ENCODE measurements at regions of chr3 and their contacts with region 1.

Region 1: DNA sequence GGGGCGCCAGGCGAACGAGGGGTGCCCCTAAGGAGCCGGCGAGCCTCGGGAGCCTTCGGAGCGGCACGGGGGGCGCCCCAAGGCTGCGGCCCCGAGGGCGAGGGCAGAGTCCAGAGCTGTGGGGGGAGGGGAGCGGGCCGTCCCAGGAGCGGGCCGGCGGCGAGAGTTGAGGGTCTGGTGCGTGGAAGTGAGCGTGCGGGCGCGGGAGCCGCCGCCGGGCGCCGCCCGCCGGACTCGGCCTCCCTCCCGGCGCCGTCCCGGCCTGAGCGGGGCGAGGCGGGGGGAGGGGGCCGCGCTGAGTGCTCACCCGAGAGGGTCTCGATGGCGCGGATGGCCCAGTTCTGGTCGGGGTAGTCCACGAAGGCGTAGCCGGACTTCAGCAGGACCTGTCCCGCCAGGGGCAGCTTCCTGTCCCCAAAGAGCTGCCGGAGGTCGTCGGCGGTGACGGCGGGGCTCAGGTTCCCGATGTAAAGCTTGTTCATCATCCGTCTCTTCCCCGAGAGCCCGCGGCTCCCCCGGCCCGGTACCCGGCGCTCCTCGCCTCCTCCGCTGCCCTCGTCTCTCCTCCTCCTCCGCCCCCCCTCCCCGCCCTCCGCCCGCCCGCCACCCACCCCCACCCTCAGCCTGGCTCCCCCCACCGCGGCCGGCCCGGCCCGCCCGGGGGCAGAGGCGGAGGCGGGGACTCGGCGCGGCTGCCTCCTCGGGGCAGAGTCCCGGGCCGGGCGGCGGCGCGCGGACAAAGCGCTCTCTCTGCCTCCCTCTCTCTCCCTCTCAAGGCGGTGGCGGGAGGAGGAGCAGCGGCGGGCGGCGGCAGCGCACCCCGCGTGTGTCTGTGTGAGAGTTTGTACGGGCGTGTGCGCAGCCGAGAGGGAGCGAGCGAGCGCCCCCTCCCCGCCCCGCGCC is at the start of gene IGF2BP2:
- DNase-seq: peak; percentile 78
- H3K4me3 Mint-ChIP-seq: peak within 1 kb of the TSS; percentile 96
- H3K27ac Mint-ChIP-seq: peak within 1 kb of the TSS; percentile 99
- H3K4me1 Mint-ChIP-seq: peaks cover 23% of the 10 kb centered on the region
- H3K27me3 Mint-ChIP-seq: no peaks in the 10 kb centered on the region
- CTCF ChIP-seq: no peak
- total RNA-seq, gene IGF2BP2: 108 and 154 TPM in 2 replicates

Region 2: GRCh38 chr3:185402561-185402960 is 422.2 kb before region 1 on chr3:
- CTCF ChIA-PET with region 1: no interaction called
- POLR2A ChIA-PET with region 1: no interaction called
- intact Hi-C with region 1: no loop called
- DNase-seq: no peak
- H3K4me3 Mint-ChIP-seq: no peak overlapping the region
- H3K27ac Mint-ChIP-seq: no peak overlapping the region
- H3K4me1 Mint-ChIP-seq: no peaks in the 10 kb centered on the region
- H3K27me3 Mint-ChIP-seq: no peaks in the 10 kb centered on the region
- CTCF ChIP-seq: no peak

Region 3: DNA sequence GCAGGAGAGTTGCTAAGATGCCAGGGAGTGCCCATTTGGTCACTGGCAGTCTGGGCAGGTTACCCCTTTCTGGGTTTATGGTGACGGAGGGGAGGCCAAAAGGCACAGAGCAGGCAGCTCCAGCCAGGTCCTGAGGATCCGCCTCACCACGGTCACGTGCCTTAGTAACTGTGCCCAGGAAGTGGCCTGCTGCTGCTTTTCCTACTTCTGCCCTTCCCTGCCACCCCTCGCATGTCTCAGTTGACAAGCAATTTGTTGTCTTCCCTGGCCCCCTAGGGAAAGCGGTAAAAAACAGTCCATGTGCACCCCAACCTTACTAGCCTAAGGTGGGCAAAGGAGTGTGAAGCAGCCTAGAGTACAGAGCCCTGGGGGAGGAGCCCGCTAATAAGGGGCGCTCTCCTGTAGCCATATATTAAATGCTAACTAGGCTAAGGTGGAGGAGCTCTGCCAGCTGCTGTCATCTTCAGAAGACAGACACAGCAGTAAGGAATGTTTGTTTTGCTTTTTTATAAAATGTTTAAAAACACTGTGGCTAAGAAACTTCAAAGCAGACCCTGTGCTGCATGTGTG is 263.3 kb before region 1 on chr3:
- CTCF ChIA-PET with region 1: no interaction called
- POLR2A ChIA-PET with region 1: no interaction called
- intact Hi-C with region 1: no loop called
- DNase-seq: no peak
- H3K4me3 Mint-ChIP-seq: no peak overlapping the region
- H3K27ac Mint-ChIP-seq: no peak overlapping the region
- H3K4me1 Mint-ChIP-seq: peaks cover 15% of the 10 kb centered on the region
- H3K27me3 Mint-ChIP-seq: no peaks in the 10 kb centered on the region
- CTCF ChIP-seq: no peak

Region 4: GRCh38 chr3:185659942-185660921 is 164.5 kb before region 1 on chr3:
- CTCF ChIA-PET with region 1: interaction called, 4 read pairs
- POLR2A ChIA-PET with region 1: interaction called, 73 read pairs
- intact Hi-C with region 1: loop called (anchors 5 kb)
- DNase-seq: peak; percentile 84
- H3K4me3 Mint-ChIP-seq: no peak overlapping the region
- H3K27ac Mint-ChIP-seq: peak overlapping the region; percentile 86
- H3K4me1 Mint-ChIP-seq: peaks cover 53% of the 10 kb centered on the region
- H3K27me3 Mint-ChIP-seq: no peaks in the 10 kb centered on the region
- CTCF ChIP-seq: peak; percentile 97

Region 5: GRCh38 chr3:185733980-185734724 is 90.6 kb before region 1 on chr3:
- CTCF ChIA-PET with region 1: interaction called, 7 read pairs
- POLR2A ChIA-PET with region 1: interaction called, 128 read pairs
- intact Hi-C with region 1: loop called (anchors 1 kb)
- DNase-seq: peak; percentile 93
- H3K4me3 Mint-ChIP-seq: no peak overlapping the region
- H3K27ac Mint-ChIP-seq: peak overlapping the region; percentile 68
- H3K4me1 Mint-ChIP-seq: peaks cover 51% of the 10 kb centered on the region
- H3K27me3 Mint-ChIP-seq: no peaks in the 10 kb centered on the region
- CTCF ChIP-seq: peak; percentile 58

Region 6: GRCh38 chr3:185764163-185764979 is 60.4 kb before region 1 on chr3:
- CTCF ChIA-PET with region 1: interaction called, 8 read pairs
- POLR2A ChIA-PET with region 1: interaction called, 14 read pairs
- intact Hi-C with region 1: loop called (anchors 5 kb)
- DNase-seq: no peak
- H3K4me3 Mint-ChIP-seq: no peak overlapping the region
- H3K27ac Mint-ChIP-seq: peak overlapping the region; percentile 35
- H3K4me1 Mint-ChIP-seq: peaks cover 44% of the 10 kb centered on the region
- H3K27me3 Mint-ChIP-seq: no peaks in the 10 kb centered on the region
- CTCF ChIP-seq: no peak

Region 7: DNA sequence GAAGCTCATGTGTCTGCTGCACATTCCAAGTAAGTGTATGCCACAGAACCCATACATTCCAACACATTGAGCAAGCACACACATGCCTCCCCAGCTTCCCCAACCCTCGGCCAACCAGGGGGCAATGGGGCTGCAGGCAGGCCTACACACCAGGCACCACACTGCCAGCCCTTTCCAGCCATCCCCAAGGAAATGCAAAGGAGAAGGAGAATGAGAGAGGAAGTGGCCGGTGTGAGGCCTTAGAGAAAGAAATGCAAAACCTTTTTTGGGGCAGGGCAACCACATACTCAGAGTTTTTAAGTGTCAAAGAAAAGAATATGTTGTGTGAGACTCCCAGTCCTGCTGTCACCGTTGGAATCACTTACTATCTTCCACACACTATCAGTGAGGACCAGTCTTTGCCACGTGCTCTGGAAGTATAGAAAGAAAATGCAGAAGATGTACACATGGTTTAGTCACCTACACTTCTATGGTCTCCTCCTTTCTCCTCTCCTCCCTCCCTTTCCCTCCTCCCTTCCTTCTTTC is 11.0 kb before region 1 on chr3:
- CTCF ChIA-PET with region 1: interaction called, 5 read pairs
- POLR2A ChIA-PET with region 1: interaction called, 49 read pairs
- intact Hi-C with region 1: no loop called
- DNase-seq: peak; percentile 73
- H3K4me3 Mint-ChIP-seq: peak overlapping the region; percentile 39
- H3K27ac Mint-ChIP-seq: peak overlapping the region; percentile 85
- H3K4me1 Mint-ChIP-seq: peaks cover 39% of the 10 kb centered on the region
- H3K27me3 Mint-ChIP-seq: no peaks in the 10 kb centered on the region
- CTCF ChIP-seq: no peak

Region 8: GRCh38 chr3:185929192-185930151 is 104.7 kb after region 1 on chr3:
- CTCF ChIA-PET with region 1: interaction called, 5 read pairs
- POLR2A ChIA-PET with region 1: interaction called, 71 read pairs
- intact Hi-C with region 1: loop called (anchors 2 kb)
- DNase-seq: no peak
- H3K4me3 Mint-ChIP-seq: peak overlapping the region; percentile 98
- H3K27ac Mint-ChIP-seq: peak overlapping the region; percentile 21
- H3K4me1 Mint-ChIP-seq: peaks cover 93% of the 10 kb centered on the region
- H3K27me3 Mint-ChIP-seq: no peaks in the 10 kb centered on the region
- CTCF ChIP-seq: no peak

Region 9: GRCh38 chr3:186057594-186057993 is 232.9 kb after region 1 on chr3:
- CTCF ChIA-PET with region 1: no interaction called
- POLR2A ChIA-PET with region 1: no interaction called
- intact Hi-C with region 1: no loop called
- DNase-seq: peak; percentile 71
- H3K4me3 Mint-ChIP-seq: no peak overlapping the region
- H3K27ac Mint-ChIP-seq: no peak overlapping the region
- H3K4me1 Mint-ChIP-seq: peaks cover 8% of the 10 kb centered on the region
- H3K27me3 Mint-ChIP-seq: no peaks in the 10 kb centered on the region
- CTCF ChIP-seq: no peak

Measured in MCF 10A (cell line).